ENCODE measurements at regions of chr6 and their contacts with region 1.

Region 1: GRCh38 chr6:32127717-32128592 is at the start of gene ATF6B:
- DNase-seq: peak; percentile 80 to 100 (median 96)
- ATAC-seq: peak; percentile 97
- H3K4me3 ChIP-seq: peak within 1 kb of the TSS; percentile 96
- H3K4me3 Mint-ChIP-seq: peak within 1 kb of the TSS; percentile 96 to 100 (median 98)
- H3K27ac ChIP-seq: peak within 1 kb of the TSS; percentile 92
- H3K27ac Mint-ChIP-seq: peak within 1 kb of the TSS; percentile 83 to 98 (median 97)
- H3K4me1 ChIP-seq: peaks cover 33% of the 10 kb centered on the region in 2 donors
- H3K4me1 Mint-ChIP-seq: peaks cover 38 to 66% (median 53%) of the 10 kb centered on the region in 7 donors
- H3K27me3 ChIP-seq: no peaks in the 10 kb centered on the region
- H3K27me3 Mint-ChIP-seq: peaks cover 0 to 4% (median 0%) of the 10 kb centered on the region in 5 donors
- total RNA-seq, gene ATF6B: 115 to 168 (median 142) TPM

Region 2: DNA sequence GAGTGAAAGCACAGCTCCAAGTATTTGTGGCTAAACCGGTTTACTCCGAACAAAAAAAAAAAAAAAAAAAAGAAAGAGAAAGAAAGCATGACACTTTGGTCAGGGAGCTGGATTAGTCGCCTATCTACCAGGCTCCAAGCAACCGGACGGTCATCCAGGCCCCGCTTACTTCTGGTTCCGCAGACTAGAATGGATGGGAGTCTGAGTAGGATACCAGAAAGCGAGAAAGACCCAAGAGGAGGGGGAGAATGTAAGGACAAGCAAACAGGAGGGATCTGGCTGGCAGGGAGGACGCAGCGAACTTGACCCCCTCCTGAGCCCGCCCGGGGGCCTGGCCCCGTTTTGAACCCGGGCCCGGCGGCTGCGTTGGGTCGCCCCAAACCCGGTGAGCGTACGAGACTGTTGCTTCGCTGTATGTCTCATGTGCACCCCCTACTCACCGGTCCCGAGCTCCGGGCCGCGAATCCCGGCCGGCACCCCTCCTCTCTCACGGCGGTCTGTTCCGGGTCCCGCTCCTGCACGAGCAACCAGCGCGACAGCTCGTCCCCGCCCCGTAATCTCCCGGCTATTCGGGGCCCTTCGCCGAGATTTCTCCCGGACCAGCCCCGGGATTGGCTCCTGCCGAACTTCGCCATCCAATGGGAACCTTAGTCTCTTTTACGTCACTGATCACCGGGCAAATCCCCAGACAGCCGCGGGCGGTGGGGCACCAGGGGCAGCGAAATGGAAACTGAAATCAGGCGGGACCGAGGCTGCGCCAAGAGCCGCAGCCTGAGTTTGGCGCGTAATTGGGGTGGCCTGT is 1914.9 kb before region 1 on chr6 and contains the start of gene TRIM26:
- CTCF ChIA-PET with region 1: interaction called, 8 read pairs
- POLR2A ChIA-PET with region 1: no interaction called
- intact Hi-C with region 1: loop called in 1 of 2 experiments (anchors 2 kb)
- DNase-seq: peak; percentile 88 to 99 (median 97)
- ATAC-seq: peak; percentile 94
- H3K4me3 ChIP-seq: peak within 1 kb of the TSS; percentile 83
- H3K4me3 Mint-ChIP-seq: peak within 1 kb of the TSS; percentile 89 to 100 (median 96)
- H3K27ac ChIP-seq: peak within 1 kb of the TSS; percentile 99
- H3K27ac Mint-ChIP-seq: peak within 1 kb of the TSS; percentile 96 to 100 (median 99)
- H3K4me1 ChIP-seq: peaks cover 32 to 39% of the 10 kb centered on the region in 2 donors
- H3K4me1 Mint-ChIP-seq: peaks cover 47 to 62% (median 52%) of the 10 kb centered on the region in 7 donors
- H3K27me3 ChIP-seq: no peaks in the 10 kb centered on the region
- H3K27me3 Mint-ChIP-seq: peaks cover 0 to 5% (median 0%) of the 10 kb centered on the region in 5 donors
- total RNA-seq, gene TRIM26: 40.1 to 73.1 (median 49.1) TPM

Region 3: GRCh38 chr6:31689249-31690110 is 438.5 kb before region 1 on chr6:
- CTCF ChIA-PET with region 1: no interaction called
- POLR2A ChIA-PET with region 1: no interaction called
- intact Hi-C with region 1: no loop called
- DNase-seq: no peak
- ATAC-seq: no peak
- H3K4me3 ChIP-seq: no peak overlapping the region
- H3K4me3 Mint-ChIP-seq: no peak overlapping the region
- H3K27ac ChIP-seq: no peak overlapping the region
- H3K27ac Mint-ChIP-seq: peak overlapping the region in 4 of 9 donors; percentile 14 to 55 (median 27)
- H3K4me1 ChIP-seq: no peaks in the 10 kb centered on the region
- H3K4me1 Mint-ChIP-seq: peaks cover 0 to 6% (median 0%) of the 10 kb centered on the region in 7 donors
- H3K27me3 ChIP-seq: no peaks in the 10 kb centered on the region
- H3K27me3 Mint-ChIP-seq: no peaks in the 10 kb centered on the region

Region 4: DNA sequence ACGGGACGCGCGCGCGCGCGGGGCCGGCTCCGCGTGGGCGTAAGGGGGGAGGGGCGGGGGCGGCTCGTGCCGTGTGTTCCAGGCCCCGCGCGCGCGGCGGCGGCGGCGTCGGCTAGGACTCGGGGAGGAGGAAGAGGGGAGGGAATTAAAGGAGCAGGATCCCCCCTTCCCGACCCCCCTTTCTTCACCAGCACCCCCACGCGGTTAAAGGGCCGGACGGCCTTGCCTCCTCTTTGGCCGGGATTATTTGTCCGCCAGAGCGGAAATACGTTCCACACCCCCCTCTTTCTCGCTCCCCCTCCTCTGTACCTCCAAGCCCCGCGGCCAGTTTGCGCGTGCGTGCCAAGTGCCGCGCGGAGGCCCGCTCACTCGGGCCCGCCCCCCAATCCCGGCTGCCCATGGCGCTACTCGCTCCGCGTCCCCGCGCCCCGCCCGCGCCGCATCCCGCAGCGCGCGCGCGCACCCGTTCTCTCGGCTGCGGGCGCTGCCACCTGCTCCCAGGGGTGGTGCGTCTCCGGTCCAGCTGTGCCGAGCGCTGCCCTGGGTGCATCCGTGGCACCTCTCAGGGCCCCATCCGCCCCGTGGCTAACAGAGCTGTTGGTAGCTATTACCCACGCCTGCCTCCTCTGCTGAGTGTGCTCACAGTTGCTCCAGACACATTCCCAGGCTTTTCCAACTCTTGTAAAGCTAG is 225.9 kb before region 1 on chr6 and contains the start of gene ZBTB12:
- CTCF ChIA-PET with region 1: no interaction called
- POLR2A ChIA-PET with region 1: interaction called, 3 read pairs
- intact Hi-C with region 1: loop called in 1 of 2 experiments (anchors 5 kb)
- DNase-seq: peak; percentile 76 to 90 (median 84)
- ATAC-seq: peak; percentile 76
- H3K4me3 ChIP-seq: peak within 1 kb of the TSS; percentile 80
- H3K4me3 Mint-ChIP-seq: peak within 1 kb of the TSS; percentile 81 to 96 (median 88)
- H3K27ac ChIP-seq: peak within 1 kb of the TSS; percentile 83
- H3K27ac Mint-ChIP-seq: peak within 1 kb of the TSS; percentile 75 to 94 (median 86)
- H3K4me1 ChIP-seq: peaks cover 12 to 16% of the 10 kb centered on the region in 2 donors
- H3K4me1 Mint-ChIP-seq: peaks cover 18 to 34% (median 32%) of the 10 kb centered on the region in 7 donors
- H3K27me3 ChIP-seq: no peaks in the 10 kb centered on the region
- H3K27me3 Mint-ChIP-seq: peaks cover 0 to 11% (median 0%) of the 10 kb centered on the region in 5 donors
- total RNA-seq, gene ZBTB12: 0.77 to 4.5 (median 2.5) TPM

Region 5: DNA sequence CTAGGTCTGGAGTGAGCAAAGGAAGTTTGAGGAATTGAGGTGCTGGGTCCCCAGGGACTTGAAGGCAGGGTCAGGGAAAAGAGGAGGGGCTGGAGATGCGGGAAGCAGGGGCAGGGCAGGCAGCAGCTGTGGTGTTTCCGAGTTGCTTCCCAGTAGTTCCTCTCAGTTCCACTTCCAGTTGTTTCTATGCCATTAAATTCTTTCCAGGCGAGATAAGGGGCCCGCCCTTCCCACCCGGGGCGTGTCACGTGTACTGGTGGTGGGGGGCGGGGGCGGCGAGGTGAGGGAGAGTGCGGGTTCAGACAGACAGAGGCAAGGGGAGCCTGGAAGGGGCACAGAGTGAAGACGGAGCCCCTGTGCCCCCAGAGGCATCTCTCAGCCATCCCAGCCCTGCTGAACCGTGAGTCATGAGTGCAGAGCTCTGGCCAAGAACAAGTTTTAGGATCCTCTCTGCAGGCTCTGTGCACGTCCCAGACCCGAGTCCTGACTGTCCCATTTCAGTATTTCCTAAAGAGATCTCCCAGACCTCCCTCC is 19.8 kb before region 1 on chr6:
- CTCF ChIA-PET with region 1: no interaction called
- POLR2A ChIA-PET with region 1: no interaction called
- intact Hi-C with region 1: no loop called
- DNase-seq: no peak
- ATAC-seq: peak; percentile 20
- H3K4me3 ChIP-seq: no peak overlapping the region
- H3K4me3 Mint-ChIP-seq: peak overlapping the region in 5 of 10 donors; percentile 24 to 74 (median 69)
- H3K27ac ChIP-seq: no peak overlapping the region
- H3K27ac Mint-ChIP-seq: peak overlapping the region in 5 of 9 donors; percentile 32 to 91 (median 63)
- H3K4me1 ChIP-seq: peaks cover 0 to 9% of the 10 kb centered on the region in 2 donors
- H3K4me1 Mint-ChIP-seq: peaks cover 2 to 35% (median 28%) of the 10 kb centered on the region in 7 donors
- H3K27me3 ChIP-seq: no peaks in the 10 kb centered on the region
- H3K27me3 Mint-ChIP-seq: peaks cover 0 to 39% (median 6%) of the 10 kb centered on the region in 5 donors

Region 6: GRCh38 chr6:32148289-32149091 is 20.5 kb after region 1 on chr6:
- CTCF ChIA-PET with region 1: interaction called, 3 read pairs
- POLR2A ChIA-PET with region 1: interaction called, 3 read pairs
- intact Hi-C with region 1: loop called in 1 of 2 experiments (anchors 1 kb)
- DNase-seq: peak; percentile 62 to 82 (median 72)
- ATAC-seq: peak; percentile 91
- H3K4me3 ChIP-seq: peak overlapping the region; percentile 30
- H3K4me3 Mint-ChIP-seq: peak overlapping the region; percentile 75 to 91 (median 86)
- H3K27ac ChIP-seq: peak overlapping the region; percentile 47
- H3K27ac Mint-ChIP-seq: peak overlapping the region; percentile 46 to 91 (median 85)
- H3K4me1 ChIP-seq: peaks cover 0 to 22% of the 10 kb centered on the region in 2 donors
- H3K4me1 Mint-ChIP-seq: peaks cover 37 to 49% (median 46%) of the 10 kb centered on the region in 7 donors
- H3K27me3 ChIP-seq: no peaks in the 10 kb centered on the region
- H3K27me3 Mint-ChIP-seq: peaks cover 0 to 62% (median 12%) of the 10 kb centered on the region in 5 donors

Region 7: GRCh38 chr6:32177788-32178546 is 50.0 kb after region 1 on chr6 and contains the start of gene RNF5:
- CTCF ChIA-PET with region 1: interaction called, 3 read pairs
- POLR2A ChIA-PET with region 1: interaction called, 36 read pairs
- intact Hi-C with region 1: loop called (anchors 1 kb)
- DNase-seq: peak; percentile 60 to 99 (median 97)
- ATAC-seq: peak; percentile 89
- H3K4me3 ChIP-seq: peak within 1 kb of the TSS; percentile 82
- H3K4me3 Mint-ChIP-seq: peak within 1 kb of the TSS; percentile 85 to 98 (median 95)
- H3K27ac ChIP-seq: peak within 1 kb of the TSS; percentile 91
- H3K27ac Mint-ChIP-seq: peak within 1 kb of the TSS; percentile 87 to 100 (median 95)
- H3K4me1 ChIP-seq: peaks cover 31 to 63% of the 10 kb centered on the region in 2 donors
- H3K4me1 Mint-ChIP-seq: peaks cover 63 to 86% (median 69%) of the 10 kb centered on the region in 7 donors
- H3K27me3 ChIP-seq: no peaks in the 10 kb centered on the region
- H3K27me3 Mint-ChIP-seq: no peaks in the 10 kb centered on the region
- total RNA-seq, gene RNF5: 17.0 to 50.6 (median 40.9) TPM

Region 8: DNA sequence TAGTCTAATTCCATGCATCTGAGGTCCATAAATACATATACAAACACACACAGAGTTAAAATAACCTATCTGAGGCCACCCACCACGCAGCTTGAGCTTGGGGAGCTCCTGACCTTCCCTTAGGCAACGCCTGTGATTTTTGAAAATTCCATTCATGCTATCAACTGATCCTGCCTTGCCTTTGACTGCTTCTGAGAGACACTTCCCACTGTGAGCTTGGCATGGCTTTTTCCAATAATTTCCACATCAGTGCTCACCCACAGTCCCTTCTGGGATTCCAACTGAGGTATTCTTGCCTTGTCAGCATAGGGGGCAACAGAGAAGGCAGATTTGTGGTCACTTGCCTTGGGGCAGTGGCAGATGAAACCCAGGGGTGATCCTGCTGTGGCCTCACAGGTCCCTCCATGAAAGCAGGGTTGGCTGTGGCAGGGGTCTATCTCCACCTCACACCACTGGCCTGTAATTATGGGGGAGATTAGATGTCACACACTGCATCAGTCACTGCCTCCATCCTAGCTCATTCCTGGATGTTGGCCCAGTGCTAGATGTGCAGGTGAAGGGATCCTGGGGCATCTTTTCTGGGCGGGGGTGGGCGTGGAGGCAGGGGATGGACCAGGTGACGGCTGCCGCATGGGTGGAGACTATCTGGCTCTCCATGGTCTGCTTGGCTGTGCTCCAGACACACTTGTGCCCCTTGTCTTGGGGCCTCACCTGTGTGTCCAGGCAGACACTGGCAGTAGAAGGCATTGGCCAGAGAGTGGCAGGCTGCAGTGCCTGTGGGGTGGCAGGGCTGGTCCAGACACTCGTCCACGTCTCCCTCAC is 75.7 kb after region 1 on chr6:
- CTCF ChIA-PET with region 1: no interaction called
- POLR2A ChIA-PET with region 1: no interaction called
- intact Hi-C with region 1: no loop called
- DNase-seq: no peak
- ATAC-seq: no peak
- H3K4me3 ChIP-seq: no peak overlapping the region
- H3K4me3 Mint-ChIP-seq: no peak overlapping the region
- H3K27ac ChIP-seq: no peak overlapping the region
- H3K27ac Mint-ChIP-seq: peak overlapping the region in 1 of 9 donors; percentile 62
- H3K4me1 ChIP-seq: no peaks in the 10 kb centered on the region
- H3K4me1 Mint-ChIP-seq: peaks cover 0 to 5% (median 0%) of the 10 kb centered on the region in 7 donors
- H3K27me3 ChIP-seq: no peaks in the 10 kb centered on the region
- H3K27me3 Mint-ChIP-seq: peaks cover 0 to 22% (median 0%) of the 10 kb centered on the region in 5 donors

Region 9: GRCh38 chr6:32843979-32844838 is 716.3 kb after region 1 on chr6 and contains the start of gene PSMB8:
- CTCF ChIA-PET with region 1: no interaction called
- POLR2A ChIA-PET with region 1: interaction called, 3 read pairs
- intact Hi-C with region 1: loop called in 1 of 2 experiments (anchors 5 kb)
- DNase-seq: peak; percentile 92 to 99 (median 97)
- ATAC-seq: peak; percentile 90
- H3K4me3 ChIP-seq: peak within 1 kb of the TSS; percentile 97
- H3K4me3 Mint-ChIP-seq: peak within 1 kb of the TSS; percentile 92 to 99 (median 98)
- H3K27ac ChIP-seq: peak within 1 kb of the TSS; percentile 97
- H3K27ac Mint-ChIP-seq: peak within 1 kb of the TSS; percentile 99 to 100 (median 100)
- H3K4me1 ChIP-seq: peaks cover 71 to 72% of the 10 kb centered on the region in 2 donors
- H3K4me1 Mint-ChIP-seq: peaks cover 66 to 83% (median 79%) of the 10 kb centered on the region in 7 donors
- H3K27me3 ChIP-seq: no peaks in the 10 kb centered on the region
- H3K27me3 Mint-ChIP-seq: no peaks in the 10 kb centered on the region
- total RNA-seq, gene PSMB8: 111 to 419 (median 115) TPM